ENCODE measurements at regions of chr12 and their contacts with region 1.

Region 1: DNA sequence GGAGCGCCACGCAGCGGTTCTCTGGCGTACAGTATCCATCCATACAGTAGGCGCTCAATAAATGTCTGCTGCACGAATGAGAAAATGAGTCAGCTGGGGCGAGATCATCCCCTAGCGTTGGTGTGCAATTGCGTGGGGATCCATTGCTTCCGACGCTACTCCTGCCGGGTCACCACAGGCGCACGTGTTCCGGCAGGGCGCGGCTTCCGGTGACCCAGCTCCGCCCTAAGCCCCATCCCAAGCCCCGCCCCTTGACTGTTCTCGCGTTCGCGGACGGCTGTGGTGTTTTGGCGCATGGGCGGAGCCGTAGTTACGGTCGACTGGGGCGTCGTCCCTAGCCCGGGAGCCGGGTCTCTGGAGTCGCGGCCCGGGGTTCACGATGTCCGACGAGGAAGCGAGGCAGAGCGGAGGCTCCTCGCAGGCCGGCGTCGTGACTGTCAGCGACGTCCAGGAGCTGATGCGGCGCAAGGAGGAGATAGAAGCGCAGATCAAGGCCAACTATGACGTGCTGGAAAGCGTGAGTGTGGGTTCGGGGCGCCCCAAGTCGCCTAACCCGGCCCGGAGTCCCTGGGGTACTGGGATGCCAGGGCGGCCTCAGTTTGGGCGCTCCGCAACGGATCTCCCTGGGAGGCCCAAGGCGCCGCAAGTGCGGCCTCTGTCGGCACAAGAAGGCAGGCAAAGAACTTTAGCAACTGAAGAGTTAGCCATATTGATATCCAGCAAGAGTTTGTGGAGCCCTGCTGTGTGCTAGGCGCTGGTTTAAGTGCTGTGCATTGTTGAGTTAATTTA is at the start of gene PSMD9:
- DNase-seq: peak; percentile 96
- H3K4me3 ChIP-seq: peak within 1 kb of the TSS; percentile 25 to 90 (median 82)
- H3K27ac ChIP-seq: peak within 1 kb of the TSS; percentile 26
- H3K4me1 ChIP-seq: peaks cover 17% of the 10 kb centered on the region
- H3K27me3 ChIP-seq: no peaks in the 10 kb centered on the region
- CTCF ChIP-seq: peak; percentile 60 to 87
- POLR2A ChIP-seq: peak; percentile 96
- total RNA-seq, gene PSMD9: 64.6 and 69.2 TPM in 2 replicates

Region 2: DNA sequence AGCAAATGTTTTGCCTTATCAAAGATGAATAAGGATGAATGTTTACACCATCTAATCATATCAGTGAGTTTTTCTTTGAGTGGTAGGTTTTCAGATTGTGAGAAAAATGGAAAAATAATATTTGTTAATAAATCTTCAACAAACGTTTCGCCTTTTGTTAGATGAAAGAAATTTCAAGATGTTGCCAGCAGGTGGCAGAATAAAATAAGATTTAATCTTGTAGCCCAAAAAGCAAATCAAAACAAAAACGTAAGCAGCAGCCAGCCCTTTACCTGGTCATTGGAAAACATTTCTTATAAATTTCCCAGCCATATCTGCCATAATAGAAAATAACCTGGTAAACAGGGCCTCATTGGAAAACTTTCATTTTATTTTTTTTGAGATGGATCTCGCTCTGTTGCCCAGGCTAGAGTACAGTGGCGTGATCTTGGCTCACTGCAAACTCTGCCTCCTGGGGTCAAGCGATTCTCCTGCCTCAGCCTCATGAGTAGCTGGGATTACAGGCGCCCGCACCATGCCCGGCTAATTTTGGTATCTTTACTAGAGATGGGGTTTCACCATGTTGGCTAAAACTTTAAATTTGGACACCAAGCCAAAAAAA is 191.5 kb before region 1 on chr12:
- CTCF ChIA-PET with region 1: no interaction called
- POLR2A ChIA-PET with region 1: no interaction called
- dilution Hi-C with region 1: no loop called
- intact Hi-C with region 1: loop called (anchors 1 kb)
- DNase-seq: peak; percentile 62
- H3K4me3 ChIP-seq: no peak overlapping the region
- H3K27ac ChIP-seq: no peak overlapping the region
- H3K4me1 ChIP-seq: no peaks in the 10 kb centered on the region
- H3K27me3 ChIP-seq: peaks cover under 1 to 3% of the 10 kb centered on the region in 2 experiments
- CTCF ChIP-seq: peak in 1 of 2 donors; percentile 19
- POLR2A ChIP-seq: no peak

Region 3: GRCh38 chr12:121773011-121773777 is 115.5 kb before region 1 on chr12:
- CTCF ChIA-PET with region 1: interaction called, 4 read pairs
- POLR2A ChIA-PET with region 1: no interaction called
- dilution Hi-C with region 1: no loop called
- intact Hi-C with region 1: loop called (anchors 1 kb)
- DNase-seq: peak; percentile 40
- H3K4me3 ChIP-seq: no peak overlapping the region
- H3K27ac ChIP-seq: no peak overlapping the region
- H3K4me1 ChIP-seq: no peaks in the 10 kb centered on the region
- H3K27me3 ChIP-seq: no peaks in the 10 kb centered on the region
- CTCF ChIP-seq: peak; percentile 80
- POLR2A ChIP-seq: no peak

Region 4: DNA sequence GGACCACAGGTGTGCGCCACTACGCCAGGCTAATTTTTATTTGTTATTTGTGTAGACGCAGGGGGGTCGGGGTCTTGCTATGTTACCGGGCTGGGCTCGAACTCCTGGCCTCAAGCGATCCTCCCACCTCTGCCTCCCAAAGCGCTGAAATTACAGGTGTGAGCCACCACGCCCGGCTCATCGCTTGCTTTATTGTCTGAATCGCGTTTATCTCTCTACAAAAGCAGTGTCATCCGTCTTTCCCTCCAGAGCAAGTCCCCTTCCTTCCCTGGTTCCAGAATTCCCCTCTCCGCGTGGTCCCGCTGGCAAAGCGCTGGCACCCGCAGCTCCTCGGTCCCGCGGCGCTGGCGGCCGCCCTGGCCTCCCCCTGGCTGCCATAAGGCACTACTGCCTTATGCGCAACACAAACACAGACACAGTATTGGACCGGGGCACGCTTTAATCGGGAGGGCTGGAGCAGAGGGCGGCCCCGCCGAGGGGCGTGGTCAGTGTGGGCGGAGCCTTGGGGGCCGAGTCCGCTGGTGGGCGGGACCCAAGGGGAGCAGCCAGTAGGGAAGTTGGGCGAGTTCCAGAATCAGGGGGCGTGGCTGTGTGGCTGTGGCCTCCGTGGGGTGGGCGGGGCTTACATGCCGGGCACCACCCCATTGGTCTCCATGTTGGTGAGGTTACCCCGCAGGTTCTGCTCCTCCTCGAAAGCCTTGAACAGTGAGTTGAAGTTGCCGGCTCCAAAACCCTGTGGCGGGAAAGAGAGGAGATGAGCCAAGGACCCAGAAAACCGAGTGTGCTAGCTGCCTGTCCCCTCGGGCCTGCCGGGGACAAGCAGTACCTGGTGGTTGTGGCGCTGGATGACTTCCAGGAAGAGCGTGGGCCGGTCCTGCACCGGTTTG is 49.3 kb before region 1 on chr12:
- CTCF ChIA-PET with region 1: interaction called, 8 read pairs
- POLR2A ChIA-PET with region 1: no interaction called
- dilution Hi-C with region 1: no loop called
- intact Hi-C with region 1: loop called (anchors 1 kb)
- DNase-seq: peak; percentile 99
- H3K4me3 ChIP-seq: peak overlapping the region; percentile 47 to 56 (median 53)
- H3K27ac ChIP-seq: no peak overlapping the region
- H3K4me1 ChIP-seq: peaks cover 2% of the 10 kb centered on the region
- H3K27me3 ChIP-seq: no peaks in the 10 kb centered on the region
- CTCF ChIP-seq: peak; percentile 38 to 63
- POLR2A ChIP-seq: peak; percentile 26

Region 5: GRCh38 chr12:121933522-121934308 is 45.0 kb after region 1 on chr12:
- CTCF ChIA-PET with region 1: no interaction called
- POLR2A ChIA-PET with region 1: no interaction called
- dilution Hi-C with region 1: no loop called
- intact Hi-C with region 1: no loop called
- DNase-seq: no peak
- H3K4me3 ChIP-seq: no peak overlapping the region
- H3K27ac ChIP-seq: no peak overlapping the region
- H3K4me1 ChIP-seq: peaks cover 3% of the 10 kb centered on the region
- H3K27me3 ChIP-seq: no peaks in the 10 kb centered on the region
- CTCF ChIP-seq: no peak
- POLR2A ChIP-seq: no peak

Region 6: DNA sequence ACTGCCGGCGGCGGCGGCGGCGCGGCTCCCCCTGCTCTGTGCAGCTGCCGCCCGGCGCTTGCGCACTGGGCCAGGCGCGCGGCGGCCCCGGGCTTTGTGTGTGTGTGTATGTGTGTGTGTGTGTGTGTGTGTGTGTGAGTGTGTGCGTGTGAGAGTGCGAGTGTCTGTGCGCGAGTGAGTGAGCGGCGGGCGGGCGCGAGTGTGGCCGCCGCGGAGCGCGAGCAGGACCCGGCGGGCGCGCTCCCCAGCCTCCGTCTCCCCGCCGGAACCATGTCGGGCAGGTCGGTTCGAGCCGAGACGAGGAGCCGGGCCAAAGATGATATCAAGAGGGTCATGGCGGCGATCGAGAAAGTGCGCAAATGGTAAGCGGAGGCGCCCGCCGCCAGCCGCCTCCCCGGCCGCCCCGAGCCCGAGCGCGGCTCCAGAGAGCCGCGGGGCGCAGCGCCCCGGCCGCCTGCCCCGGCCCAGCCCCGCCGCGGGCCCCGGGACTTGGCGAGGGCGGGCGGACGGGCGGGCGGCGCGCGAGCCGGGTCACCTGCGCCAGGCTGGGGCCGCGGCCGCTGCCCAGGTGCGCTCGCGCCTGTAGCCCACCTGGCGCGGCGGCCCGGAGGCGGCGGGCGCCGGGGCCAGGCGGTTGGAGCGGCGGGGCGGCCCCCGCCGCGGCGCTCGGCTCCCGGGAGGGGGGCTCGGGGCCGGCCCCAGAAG is 133.3 kb after region 1 on chr12 and contains the start of gene BCL7A:
- CTCF ChIA-PET with region 1: no interaction called
- POLR2A ChIA-PET with region 1: no interaction called
- dilution Hi-C with region 1: no loop called
- intact Hi-C with region 1: loop called (anchors 2 kb)
- DNase-seq: peak; percentile 72
- H3K4me3 ChIP-seq: peak within 1 kb of the TSS; percentile 58 to 78 (median 70)
- H3K27ac ChIP-seq: peak within 1 kb of the TSS; percentile 46
- H3K4me1 ChIP-seq: peaks cover 19% of the 10 kb centered on the region
- H3K27me3 ChIP-seq: no peaks in the 10 kb centered on the region
- CTCF ChIP-seq: no peak
- POLR2A ChIP-seq: peak; percentile 39
- total RNA-seq, gene BCL7A: 11.1 and 12.6 TPM in 2 replicates

Measured in endothelial cell of umbilical vein (primary cell).